Activated naive CD4-positive, alpha-beta T cell treated with anti-CD3 and anti-CD28 coated beads for 36 hours (primary cell): ENCODE measurements at regions of chr11 and their contacts with region 1.

Region 1: GRCh38 chr11:102287964-102288724 is 29.1 kb upstream of the BIRC3 start:
- DNase-seq: peak; percentile 46
- H3K4me3 Mint-ChIP-seq: peak overlapping the region; percentile 50
- H3K27ac Mint-ChIP-seq: no peak overlapping the region
- H3K4me1 Mint-ChIP-seq: peaks cover 16% of the 10 kb centered on the region
- H3K27me3 Mint-ChIP-seq: no peaks in the 10 kb centered on the region

Region 2: DNA sequence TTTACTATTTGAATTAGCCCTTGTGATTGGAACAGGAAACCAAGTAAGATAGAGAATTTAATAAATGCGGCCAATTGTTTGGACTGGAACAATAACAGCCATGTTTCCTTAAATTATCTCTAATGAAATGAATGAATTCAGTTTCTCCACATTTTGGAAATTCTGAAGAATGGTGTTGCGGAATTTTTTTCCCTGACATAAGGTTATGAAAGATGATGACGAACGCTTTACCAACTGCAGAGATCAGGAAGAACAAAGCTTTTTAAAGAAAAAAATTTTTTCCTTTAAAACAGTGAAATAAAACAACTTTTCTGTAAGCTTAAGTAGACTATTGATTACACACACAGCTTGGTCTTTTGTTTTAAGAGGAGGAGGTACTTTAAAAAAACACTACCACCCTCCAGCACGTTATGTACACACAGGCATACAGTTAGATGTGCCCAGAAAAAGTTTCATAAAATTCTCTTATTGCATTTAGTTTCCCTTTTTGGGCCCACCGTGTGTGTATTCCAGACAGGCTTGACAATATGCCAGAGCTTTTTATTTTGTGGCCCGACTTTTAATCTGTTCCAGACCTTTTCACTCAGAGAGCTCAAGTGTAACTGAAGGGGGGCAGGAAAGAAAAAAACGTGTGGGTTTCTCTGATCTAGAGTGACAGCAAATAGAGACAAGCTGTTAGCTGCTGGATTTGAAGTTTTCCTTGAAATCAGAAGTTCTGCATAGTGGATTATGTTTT is 100.6 kb before region 1 on chr11:
- CTCF ChIA-PET with region 1: no interaction called
- intact Hi-C with region 1: no loop called
- DNase-seq: no peak
- H3K4me3 Mint-ChIP-seq: no peak overlapping the region
- H3K27ac Mint-ChIP-seq: no peak overlapping the region
- H3K4me1 Mint-ChIP-seq: no peaks in the 10 kb centered on the region
- H3K27me3 Mint-ChIP-seq: peaks cover 7% of the 10 kb centered on the region

Region 3: DNA sequence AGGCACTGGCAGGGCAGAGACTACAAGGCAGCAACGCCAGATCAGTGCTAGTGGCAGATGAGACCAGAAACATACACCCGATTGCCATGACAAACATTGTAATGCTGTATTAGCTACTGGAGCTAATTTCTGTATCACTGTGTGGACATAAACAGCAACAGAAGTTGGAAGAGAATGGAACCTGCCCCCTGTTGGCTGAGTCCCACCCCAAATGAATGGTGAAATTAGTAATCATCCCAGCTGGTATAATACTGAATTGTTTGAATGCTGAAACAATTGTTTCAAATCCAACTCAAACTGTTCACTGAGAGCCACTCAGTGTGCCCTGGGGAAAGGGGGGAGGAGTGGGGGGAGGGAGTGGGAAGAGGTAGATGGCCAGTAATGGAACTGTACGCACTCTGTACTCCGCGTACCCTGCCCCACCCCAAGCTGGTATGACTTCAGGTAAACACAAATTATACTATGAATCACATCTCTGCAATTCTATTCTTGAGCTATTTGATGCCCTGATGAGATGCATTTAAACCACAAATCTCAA is 18.0 kb after region 1 on chr11:
- CTCF ChIA-PET with region 1: interaction called, 180 read pairs
- intact Hi-C with region 1: no loop called
- DNase-seq: peak; percentile 37
- H3K4me3 Mint-ChIP-seq: peak overlapping the region; percentile 36
- H3K27ac Mint-ChIP-seq: peak overlapping the region; percentile 74
- H3K4me1 Mint-ChIP-seq: peaks cover 59% of the 10 kb centered on the region
- H3K27me3 Mint-ChIP-seq: no peaks in the 10 kb centered on the region

Region 4: DNA sequence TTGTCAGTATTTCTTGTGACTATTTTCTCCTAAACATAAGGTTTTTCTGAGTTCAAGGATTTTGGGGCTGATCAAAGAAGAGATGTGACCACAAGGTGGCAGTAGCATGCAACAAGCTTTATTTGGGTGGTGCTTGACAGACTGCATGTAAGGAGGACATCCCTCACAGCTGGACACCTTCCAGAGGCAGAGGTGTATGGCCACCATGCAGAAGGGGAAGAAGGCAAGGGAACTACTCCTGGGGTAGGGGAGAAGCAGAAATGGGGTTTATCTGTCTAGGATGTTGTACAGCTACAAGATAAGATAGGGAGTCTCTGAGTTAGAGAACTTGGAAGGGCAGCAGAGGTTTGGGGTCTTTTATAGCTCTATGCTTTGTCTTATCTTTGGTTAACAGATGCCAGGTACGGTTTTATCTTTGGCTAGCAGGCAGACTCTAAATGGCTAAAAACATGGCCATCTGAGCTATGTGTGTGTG is 53.7 kb after region 1 on chr11:
- CTCF ChIA-PET with region 1: interaction called, 49 read pairs
- intact Hi-C with region 1: loop called (anchors 1 kb)
- DNase-seq: peak; percentile 90
- H3K4me3 Mint-ChIP-seq: no peak overlapping the region
- H3K27ac Mint-ChIP-seq: no peak overlapping the region
- H3K4me1 Mint-ChIP-seq: peaks cover 46% of the 10 kb centered on the region
- H3K27me3 Mint-ChIP-seq: no peaks in the 10 kb centered on the region

Region 5: DNA sequence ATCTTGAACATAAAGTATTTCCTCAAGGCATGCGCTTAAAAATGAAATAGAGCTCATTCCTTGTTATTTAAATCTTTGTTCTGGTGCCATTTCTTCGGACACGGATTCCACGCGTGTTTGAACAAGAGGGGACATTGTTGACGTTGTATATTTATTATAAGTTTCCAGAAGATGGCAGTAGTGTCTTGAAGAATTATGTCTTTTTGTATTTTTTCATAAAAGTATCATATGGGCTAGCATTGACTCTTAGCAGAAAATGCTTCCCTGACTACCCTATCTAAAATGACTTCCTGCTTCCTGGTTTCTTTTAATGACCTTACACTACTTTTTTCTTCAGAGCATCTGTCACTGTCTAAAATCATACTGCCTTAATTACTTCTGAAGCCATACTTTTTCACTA is 79.2 kb after region 1 on chr11:
- CTCF ChIA-PET with region 1: interaction called, 14 read pairs
- intact Hi-C with region 1: loop called (anchors 1 kb)
- DNase-seq: no peak
- H3K4me3 Mint-ChIP-seq: no peak overlapping the region
- H3K27ac Mint-ChIP-seq: peak overlapping the region; percentile 1
- H3K4me1 Mint-ChIP-seq: peaks cover 34% of the 10 kb centered on the region
- H3K27me3 Mint-ChIP-seq: no peaks in the 10 kb centered on the region

Region 6: DNA sequence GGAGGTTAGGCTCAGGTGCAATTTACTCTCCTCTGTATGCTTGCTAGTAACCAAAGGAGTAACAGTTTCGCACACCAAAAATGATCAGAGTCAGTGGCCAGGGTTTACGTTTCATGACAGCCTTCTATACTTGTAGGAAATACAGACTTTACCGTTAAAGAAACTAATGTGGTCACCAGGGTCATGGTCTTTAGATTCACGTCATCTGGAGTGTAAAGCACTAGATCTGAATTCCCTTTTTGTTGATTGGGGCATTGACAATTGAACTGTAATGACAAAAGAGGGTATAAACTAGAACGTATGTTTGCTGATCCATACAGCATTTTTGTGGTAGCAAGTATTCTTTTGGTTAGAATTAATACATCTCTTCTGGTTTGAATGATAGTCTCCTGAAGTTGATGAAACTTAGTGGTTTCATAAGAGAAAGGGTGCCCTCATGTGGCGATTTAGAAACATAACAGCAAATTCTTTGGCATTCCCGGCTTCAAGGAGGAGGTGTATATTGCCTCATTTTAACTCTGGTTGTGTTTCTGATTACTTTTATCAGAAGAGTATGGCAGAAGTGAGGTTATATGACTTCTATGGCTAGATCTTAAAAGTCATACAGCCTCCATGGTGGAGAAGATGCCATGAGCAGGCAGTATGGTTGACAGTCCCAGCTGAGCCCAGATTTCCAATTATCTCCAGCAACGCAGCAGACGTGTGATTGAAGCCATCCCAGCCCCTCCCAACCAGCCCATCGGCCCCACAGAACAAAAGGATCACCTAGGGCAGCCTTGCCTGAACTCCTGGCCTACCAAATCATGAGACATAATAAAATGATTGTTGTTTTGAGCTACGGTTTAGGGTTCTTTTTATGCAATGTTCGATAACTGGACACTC is 207.3 kb after region 1 on chr11:
- CTCF ChIA-PET with region 1: interaction called, 18 read pairs
- intact Hi-C with region 1: loop called (anchors 1 kb)
- DNase-seq: peak; percentile 53
- H3K4me3 Mint-ChIP-seq: no peak overlapping the region
- H3K27ac Mint-ChIP-seq: no peak overlapping the region
- H3K4me1 Mint-ChIP-seq: peaks cover 25% of the 10 kb centered on the region
- H3K27me3 Mint-ChIP-seq: no peaks in the 10 kb centered on the region

Region 7: DNA sequence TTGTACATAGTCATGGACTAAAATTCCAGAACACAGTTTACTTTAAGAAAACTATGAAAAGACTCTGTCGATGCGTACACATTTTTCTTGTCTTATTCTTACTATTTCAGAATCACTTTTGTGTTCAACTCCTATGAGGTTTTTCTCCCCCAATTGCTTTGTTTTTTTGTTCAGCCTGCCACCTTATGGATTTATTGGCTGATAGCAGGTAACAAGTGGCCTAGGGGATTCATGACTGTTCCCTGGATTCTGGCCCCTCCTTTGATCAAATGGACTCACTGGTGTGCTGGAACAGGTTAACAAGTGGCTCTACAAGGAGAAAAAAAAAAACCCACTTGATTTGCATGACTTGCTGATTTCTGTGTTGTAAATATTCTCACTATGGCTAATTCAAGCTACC is 326.3 kb after region 1 on chr11:
- CTCF ChIA-PET with region 1: interaction called, 18 read pairs
- intact Hi-C with region 1: loop called (anchors 1 kb)
- DNase-seq: no peak
- H3K4me3 Mint-ChIP-seq: no peak overlapping the region
- H3K27ac Mint-ChIP-seq: no peak overlapping the region
- H3K4me1 Mint-ChIP-seq: peaks cover 13% of the 10 kb centered on the region
- H3K27me3 Mint-ChIP-seq: no peaks in the 10 kb centered on the region

Region 8: GRCh38 chr11:102794447-102794781 is 506.3 kb after region 1 on chr11:
- CTCF ChIA-PET with region 1: no interaction called
- intact Hi-C with region 1: loop called (anchors 10 kb)
- DNase-seq: peak; percentile 54
- H3K4me3 Mint-ChIP-seq: no peak overlapping the region
- H3K27ac Mint-ChIP-seq: no peak overlapping the region
- H3K4me1 Mint-ChIP-seq: no peaks in the 10 kb centered on the region
- H3K27me3 Mint-ChIP-seq: no peaks in the 10 kb centered on the region